MCF 10A (cell line): ENCODE measurements at regions of chr4 and their contacts with region 1.

Region 1: GRCh38 chr4:8468746-8469535 is 28.4 kb downstream of the TRMT44 start:
- DNase-seq: peak; percentile 66
- H3K4me3 Mint-ChIP-seq: no peak overlapping the region
- H3K27ac Mint-ChIP-seq: peak overlapping the region; percentile 39
- H3K4me1 Mint-ChIP-seq: no peaks in the 10 kb centered on the region
- H3K27me3 Mint-ChIP-seq: no peaks in the 10 kb centered on the region
- CTCF ChIP-seq: peak; percentile 85

Region 2: GRCh38 chr4:7708981-7709380 is 760.0 kb before region 1 on chr4:
- CTCF ChIA-PET with region 1: no interaction called
- POLR2A ChIA-PET with region 1: no interaction called
- intact Hi-C with region 1: no loop called
- DNase-seq: no peak
- H3K4me3 Mint-ChIP-seq: no peak overlapping the region
- H3K27ac Mint-ChIP-seq: no peak overlapping the region
- H3K4me1 Mint-ChIP-seq: no peaks in the 10 kb centered on the region
- H3K27me3 Mint-ChIP-seq: no peaks in the 10 kb centered on the region
- CTCF ChIP-seq: no peak

Region 3: GRCh38 chr4:8198906-8199593 is 269.9 kb before region 1 on chr4 and contains the start of gene SH3TC1:
- CTCF ChIA-PET with region 1: no interaction called
- POLR2A ChIA-PET with region 1: no interaction called
- intact Hi-C with region 1: no loop called
- DNase-seq: peak; percentile 92
- H3K4me3 Mint-ChIP-seq: peak within 1 kb of the TSS; percentile 78
- H3K27ac Mint-ChIP-seq: peak within 1 kb of the TSS; percentile 86
- H3K4me1 Mint-ChIP-seq: peaks cover 19% of the 10 kb centered on the region
- H3K27me3 Mint-ChIP-seq: no peaks in the 10 kb centered on the region
- CTCF ChIP-seq: no peak
- total RNA-seq, gene SH3TC1: 20.4 and 28.8 TPM in 2 replicates

Region 4: DNA sequence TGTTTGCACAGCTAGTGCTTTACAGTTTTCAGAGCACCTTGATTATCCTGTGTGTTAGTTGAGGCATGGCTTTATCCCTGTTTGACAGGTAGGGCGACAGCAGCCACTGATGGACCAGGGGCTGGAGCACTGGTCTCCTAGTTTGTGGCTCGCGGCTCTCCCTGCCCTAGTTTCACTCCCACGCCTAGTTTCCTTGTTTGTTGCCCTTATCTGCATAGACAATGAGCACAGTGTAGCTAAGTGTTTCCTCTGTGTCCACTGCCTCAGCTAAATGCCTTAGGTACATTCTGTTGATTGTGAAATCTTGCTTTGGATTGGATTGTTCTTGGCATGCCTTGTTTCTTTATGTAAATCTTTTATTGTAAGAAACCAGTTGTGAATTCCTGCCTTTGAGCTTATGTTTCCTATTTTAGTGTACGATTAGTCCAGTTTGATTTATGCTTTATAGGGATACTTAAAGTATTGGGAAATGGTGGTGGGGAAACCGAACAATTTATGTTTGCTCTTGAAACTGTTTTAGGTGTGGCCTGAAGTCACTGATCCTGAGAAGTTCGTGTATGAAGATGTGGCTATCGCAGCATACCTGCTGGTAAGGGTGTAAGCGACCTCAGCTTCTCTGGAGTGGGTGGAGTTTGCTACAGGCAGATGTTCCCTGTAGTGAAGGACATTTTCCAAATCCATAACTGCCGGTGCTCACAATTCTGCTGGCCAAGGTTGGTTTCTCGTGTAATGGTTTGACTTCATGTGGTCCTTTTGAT is 17.3 kb before region 1 on chr4:
- CTCF ChIA-PET with region 1: interaction called, 13 read pairs
- POLR2A ChIA-PET with region 1: no interaction called
- intact Hi-C with region 1: no loop called
- DNase-seq: peak; percentile 12
- H3K4me3 Mint-ChIP-seq: no peak overlapping the region
- H3K27ac Mint-ChIP-seq: no peak overlapping the region
- H3K4me1 Mint-ChIP-seq: no peaks in the 10 kb centered on the region
- H3K27me3 Mint-ChIP-seq: no peaks in the 10 kb centered on the region
- CTCF ChIP-seq: no peak

Region 5: GRCh38 chr4:8547108-8547970 is 78.4 kb after region 1 on chr4:
- CTCF ChIA-PET with region 1: interaction called, 8 read pairs
- POLR2A ChIA-PET with region 1: no interaction called
- intact Hi-C with region 1: loop called (anchors 2 kb)
- DNase-seq: peak; percentile 59
- H3K4me3 Mint-ChIP-seq: no peak overlapping the region
- H3K27ac Mint-ChIP-seq: no peak overlapping the region
- H3K4me1 Mint-ChIP-seq: peaks cover 6% of the 10 kb centered on the region
- H3K27me3 Mint-ChIP-seq: no peaks in the 10 kb centered on the region
- CTCF ChIP-seq: peak; percentile 20

Region 6: GRCh38 chr4:8594097-8595038 is 125.4 kb after region 1 on chr4:
- CTCF ChIA-PET with region 1: interaction called, 27 read pairs
- POLR2A ChIA-PET with region 1: no interaction called
- intact Hi-C with region 1: loop called (anchors 1 kb)
- DNase-seq: peak; percentile 80
- H3K4me3 Mint-ChIP-seq: no peak overlapping the region
- H3K27ac Mint-ChIP-seq: no peak overlapping the region
- H3K4me1 Mint-ChIP-seq: peaks cover 3% of the 10 kb centered on the region
- H3K27me3 Mint-ChIP-seq: peaks cover 39% of the 10 kb centered on the region
- CTCF ChIP-seq: peak; percentile 77

Region 7: GRCh38 chr4:8656711-8657380 is 187.9 kb after region 1 on chr4:
- CTCF ChIA-PET with region 1: no interaction called
- POLR2A ChIA-PET with region 1: no interaction called
- intact Hi-C with region 1: no loop called
- DNase-seq: no peak
- H3K4me3 Mint-ChIP-seq: no peak overlapping the region
- H3K27ac Mint-ChIP-seq: no peak overlapping the region
- H3K4me1 Mint-ChIP-seq: no peaks in the 10 kb centered on the region
- H3K27me3 Mint-ChIP-seq: no peaks in the 10 kb centered on the region
- CTCF ChIP-seq: no peak

Region 8: GRCh38 chr4:8917868-8918783 is 449.2 kb after region 1 on chr4:
- CTCF ChIA-PET with region 1: interaction called, 10 read pairs
- POLR2A ChIA-PET with region 1: no interaction called
- intact Hi-C with region 1: loop called (anchors 2 kb)
- DNase-seq: peak; percentile 56
- H3K4me3 Mint-ChIP-seq: no peak overlapping the region
- H3K27ac Mint-ChIP-seq: no peak overlapping the region
- H3K4me1 Mint-ChIP-seq: no peaks in the 10 kb centered on the region
- H3K27me3 Mint-ChIP-seq: peaks cover 31% of the 10 kb centered on the region
- CTCF ChIP-seq: peak; percentile 92